BJ (cell line): ENCODE measurements at regions of chr5 and their contacts with region 1.

Region 1: DNA sequence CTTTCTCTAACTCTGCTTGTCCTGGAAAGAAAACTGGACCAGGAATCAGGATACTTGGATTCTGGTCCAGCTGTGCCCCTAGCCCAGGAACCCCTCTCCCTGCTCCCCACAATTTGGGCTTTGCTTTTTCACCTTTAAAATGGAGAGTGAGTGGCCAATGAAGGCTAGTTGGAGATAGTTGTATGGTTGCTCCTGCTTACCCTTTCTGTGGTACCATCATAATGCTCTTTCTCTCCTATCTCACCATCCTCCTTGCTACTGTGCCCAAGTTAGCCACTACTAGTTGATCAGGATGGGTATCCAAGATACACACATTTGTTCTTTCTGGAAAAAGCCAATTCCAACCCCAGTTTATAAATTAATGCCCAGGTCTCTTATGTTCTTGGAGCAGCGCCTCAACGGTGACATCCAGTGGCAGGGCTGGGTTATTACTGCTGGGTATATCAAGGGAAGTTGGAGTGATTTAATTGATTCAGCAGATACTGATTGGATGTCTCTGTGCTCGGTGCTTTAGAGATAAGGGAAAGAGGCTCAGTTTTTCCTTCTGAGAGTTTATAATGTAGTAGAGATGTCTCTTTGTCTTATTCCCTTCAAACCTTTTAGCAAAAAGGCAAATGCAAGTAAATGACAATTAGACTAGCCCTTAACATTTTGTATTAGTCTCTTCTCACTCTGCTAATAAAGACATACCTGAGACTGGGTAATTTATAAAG is 38.6 kb downstream of the FAXDC2 start:
- DNase-seq: no peak
- H3K4me3 ChIP-seq: no peak overlapping the region
- H3K27me3 ChIP-seq: no peaks in the 10 kb centered on the region
- CTCF ChIP-seq: peak; percentile 92

Region 2: GRCh38 chr5:154647114-154647760 is 164.6 kb before region 1 on chr5:
- CTCF ChIA-PET with region 1: interaction called, 9 read pairs
- POLR2A ChIA-PET with region 1: interaction called, 13 read pairs
- DNase-seq: no peak
- H3K4me3 ChIP-seq: no peak overlapping the region
- H3K27me3 ChIP-seq: no peaks in the 10 kb centered on the region
- CTCF ChIP-seq: no peak

Region 3: DNA sequence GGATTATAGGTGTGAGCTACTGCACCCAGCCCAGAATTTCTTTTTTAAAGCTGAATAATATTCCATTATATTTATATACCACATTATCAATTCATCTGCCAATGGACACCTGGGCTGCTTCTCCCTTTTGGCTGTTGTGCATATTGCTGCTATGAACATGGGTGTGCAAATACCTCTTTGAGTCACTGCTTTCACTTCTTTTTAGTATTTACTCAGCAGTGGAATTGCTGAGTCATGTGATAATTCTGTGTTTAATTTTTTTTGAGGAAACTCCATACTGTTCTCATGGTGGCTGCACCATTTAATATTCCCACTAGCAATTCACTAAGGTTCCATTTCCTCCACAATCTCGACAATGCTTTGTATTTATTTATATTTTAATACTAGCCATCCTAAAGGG is 165.6 kb after region 1 on chr5:
- CTCF ChIA-PET with region 1: no interaction called
- POLR2A ChIA-PET with region 1: no interaction called
- DNase-seq: no peak
- H3K4me3 ChIP-seq: no peak overlapping the region
- H3K27me3 ChIP-seq: no peaks in the 10 kb centered on the region
- CTCF ChIP-seq: no peak